HepG2 (cell line): ENCODE measurements at regions of chr10 and their contacts with region 1.

Region 1: DNA sequence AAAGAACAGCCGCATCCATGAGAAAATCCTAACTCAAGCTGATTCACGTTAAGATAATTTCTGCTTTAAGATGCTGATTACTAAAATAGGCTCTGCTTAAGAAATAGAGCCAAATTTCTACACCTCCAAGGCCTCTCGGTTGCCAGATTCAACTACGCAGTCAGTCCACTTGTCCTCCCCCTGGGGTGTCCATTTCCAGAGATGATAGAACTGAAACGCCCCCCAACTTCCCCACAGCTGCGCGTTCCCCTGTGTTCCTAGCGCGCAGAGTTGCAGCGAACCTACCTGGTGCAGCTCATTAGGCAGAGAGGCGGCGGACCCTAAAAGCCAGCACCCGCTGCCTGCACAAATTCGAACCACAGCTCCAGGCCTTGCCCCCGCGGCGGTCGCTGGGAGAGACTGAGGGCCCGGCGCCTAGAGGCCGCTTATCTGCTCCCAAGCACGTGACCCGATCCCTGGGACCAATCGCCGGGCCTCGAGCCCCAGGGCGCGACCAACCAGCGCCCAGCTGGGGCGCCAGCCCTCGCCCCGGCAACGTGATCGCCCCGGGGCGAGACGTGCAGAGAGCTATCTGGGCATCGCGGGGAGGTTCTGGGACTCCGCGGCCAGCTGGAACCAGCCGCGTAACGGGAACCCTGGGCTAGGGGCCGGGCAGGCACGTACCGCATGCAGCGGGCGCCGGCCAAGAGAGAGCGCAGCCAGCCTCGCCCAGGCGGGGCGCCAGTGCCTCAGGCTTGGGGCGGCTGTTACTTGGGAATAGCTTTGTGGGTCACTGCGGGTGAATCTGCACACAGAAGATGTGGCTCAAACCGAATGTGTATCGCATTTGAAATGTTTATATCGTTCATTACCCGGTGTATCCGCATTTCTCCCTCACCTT is at the start of gene PPP1R3C:
- DNase-seq: peak; percentile 87
- ATAC-seq: peak; percentile 98
- H3K4me3 ChIP-seq: peak within 1 kb of the TSS; percentile 69 to 87 (median 87)
- H3K27ac ChIP-seq: peak within 1 kb of the TSS; percentile 76
- H3K4me1 ChIP-seq: peaks cover 62% of the 10 kb centered on the region
- H3K27me3 ChIP-seq: no peaks in the 10 kb centered on the region
- CTCF ChIP-seq: peak; percentile 76
- EP300 ChIP-seq: 0 out of 4 replicates have a peak, but pooled peaks of 1 of the 2 experiments have one; percentile 2
- POLR2A ChIP-seq: peak; percentile 92 to 99
- RAD21 ChIP-seq: peak; percentile 55; the same call in 1 of the 2 replicates
- total RNA-seq, gene PPP1R3C: 14.8 and 18.7 TPM in 2 replicates

Region 2: GRCh38 chr10:91298224-91298871 is 334.6 kb before region 1 on chr10:
- CTCF ChIA-PET with region 1: no interaction called
- POLR2A ChIA-PET with region 1: no interaction called
- in situ Hi-C with region 1: no loop called
- intact Hi-C with region 1: loop called (anchors 1 kb)
- DNase-seq: peak; percentile 51
- ATAC-seq: peak; percentile 88
- H3K4me3 ChIP-seq: peak overlapping the region in 1 of 3 experiments; percentile 10; a peak in 1 of 6 replicates
- H3K27ac ChIP-seq: no peak overlapping the region
- H3K4me1 ChIP-seq: peaks cover 16% of the 10 kb centered on the region
- H3K27me3 ChIP-seq: no peaks in the 10 kb centered on the region
- CTCF ChIP-seq: peak; percentile 93
- EP300 ChIP-seq: no peak
- POLR2A ChIP-seq: no peak
- RAD21 ChIP-seq: peak; percentile 89

Region 3: GRCh38 chr10:91409869-91410637 is 222.9 kb before region 1 on chr10 and contains the start of gene HECTD2:
- CTCF ChIA-PET with region 1: no interaction called
- POLR2A ChIA-PET with region 1: interaction called, 5 read pairs
- in situ Hi-C with region 1: no loop called
- intact Hi-C with region 1: loop called (anchors 1 kb)
- DNase-seq: peak; percentile 49
- ATAC-seq: peak; percentile 87
- H3K4me3 ChIP-seq: peak within 1 kb of the TSS; percentile 68 to 99 (median 74)
- H3K27ac ChIP-seq: peak within 1 kb of the TSS; percentile 97
- H3K4me1 ChIP-seq: peaks cover 25% of the 10 kb centered on the region
- H3K27me3 ChIP-seq: peaks cover 2 to 7% of the 10 kb centered on the region in 2 experiments; a peak in 2 of 5 replicates
- CTCF ChIP-seq: peak; percentile 46; the same call in 1 of the 2 replicates
- EP300 ChIP-seq: no peak
- POLR2A ChIP-seq: peak; percentile 67 to 85
- RAD21 ChIP-seq: peak; percentile 64
- total RNA-seq, gene HECTD2: 5.1 and 5.2 TPM in 2 replicates

Region 4: DNA sequence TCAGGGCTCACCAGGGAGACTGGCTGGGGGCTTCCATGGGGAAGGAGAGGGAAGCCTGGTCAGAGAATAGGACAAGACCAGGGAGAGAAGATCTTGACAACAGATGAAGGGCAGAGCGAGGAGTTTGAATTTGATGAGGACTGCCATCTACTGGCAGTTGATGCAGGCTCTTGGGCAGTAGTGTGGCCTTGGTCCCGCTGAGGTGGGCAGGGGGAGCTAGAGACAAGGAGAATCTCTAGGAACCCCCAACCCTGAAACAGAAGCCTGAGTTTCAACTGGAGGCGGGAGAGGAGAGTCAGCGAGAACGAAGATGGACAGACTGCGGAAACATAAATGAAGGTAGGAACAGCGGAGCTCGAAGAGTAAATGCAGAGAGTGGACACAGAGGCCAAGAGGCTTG is 81.1 kb before region 1 on chr10:
- CTCF ChIA-PET with region 1: interaction called, 31 read pairs
- POLR2A ChIA-PET with region 1: interaction called, 23 read pairs
- in situ Hi-C with region 1: loop called (anchors 5 kb)
- intact Hi-C with region 1: loop called (anchors 1 kb)
- DNase-seq: peak; percentile 50
- ATAC-seq: peak; percentile 77
- H3K4me3 ChIP-seq: no peak overlapping the region
- H3K27ac ChIP-seq: no peak overlapping the region
- H3K4me1 ChIP-seq: peaks cover 56% of the 10 kb centered on the region
- H3K27me3 ChIP-seq: no peaks in the 10 kb centered on the region
- CTCF ChIP-seq: peak; percentile 87
- EP300 ChIP-seq: no peak
- POLR2A ChIP-seq: no peak
- RAD21 ChIP-seq: peak; percentile 75

Region 5: GRCh38 chr10:91564508-91564907 is 68.4 kb before region 1 on chr10:
- CTCF ChIA-PET with region 1: no interaction called
- POLR2A ChIA-PET with region 1: interaction called, 11 read pairs
- in situ Hi-C with region 1: loop called (anchors 5 kb)
- intact Hi-C with region 1: no loop called
- DNase-seq: no peak
- ATAC-seq: no peak
- H3K4me3 ChIP-seq: no peak overlapping the region
- H3K27ac ChIP-seq: no peak overlapping the region
- H3K4me1 ChIP-seq: peaks cover 43% of the 10 kb centered on the region
- H3K27me3 ChIP-seq: no peaks in the 10 kb centered on the region
- CTCF ChIP-seq: no peak
- EP300 ChIP-seq: no peak
- POLR2A ChIP-seq: no peak
- RAD21 ChIP-seq: no peak

Region 6: GRCh38 chr10:91613411-91614253 is 19.3 kb before region 1 on chr10:
- CTCF ChIA-PET with region 1: no interaction called
- POLR2A ChIA-PET with region 1: interaction called, 35 read pairs
- in situ Hi-C with region 1: no loop called
- intact Hi-C with region 1: no loop called
- DNase-seq: no peak
- ATAC-seq: peak; percentile 34; the same call in 2 of the 3 replicates
- H3K4me3 ChIP-seq: no peak overlapping the region
- H3K27ac ChIP-seq: no peak overlapping the region
- H3K4me1 ChIP-seq: peaks cover 9% of the 10 kb centered on the region
- H3K27me3 ChIP-seq: no peaks in the 10 kb centered on the region
- CTCF ChIP-seq: no peak
- EP300 ChIP-seq: no peak
- POLR2A ChIP-seq: no peak
- RAD21 ChIP-seq: no peak

Region 7: GRCh38 chr10:91683975-91684374 is 51.1 kb after region 1 on chr10:
- CTCF ChIA-PET with region 1: no interaction called
- POLR2A ChIA-PET with region 1: no interaction called
- in situ Hi-C with region 1: no loop called
- intact Hi-C with region 1: no loop called
- DNase-seq: no peak
- ATAC-seq: no peak
- H3K4me3 ChIP-seq: no peak overlapping the region
- H3K27ac ChIP-seq: no peak overlapping the region
- H3K4me1 ChIP-seq: no peaks in the 10 kb centered on the region
- H3K27me3 ChIP-seq: no peaks in the 10 kb centered on the region; a peak in 1 of 5 replicates
- CTCF ChIP-seq: no peak
- EP300 ChIP-seq: no peak
- POLR2A ChIP-seq: no peak
- RAD21 ChIP-seq: no peak